ENCODE measurements at regions of chr14 and their contacts with region 1.

Region 1: DNA sequence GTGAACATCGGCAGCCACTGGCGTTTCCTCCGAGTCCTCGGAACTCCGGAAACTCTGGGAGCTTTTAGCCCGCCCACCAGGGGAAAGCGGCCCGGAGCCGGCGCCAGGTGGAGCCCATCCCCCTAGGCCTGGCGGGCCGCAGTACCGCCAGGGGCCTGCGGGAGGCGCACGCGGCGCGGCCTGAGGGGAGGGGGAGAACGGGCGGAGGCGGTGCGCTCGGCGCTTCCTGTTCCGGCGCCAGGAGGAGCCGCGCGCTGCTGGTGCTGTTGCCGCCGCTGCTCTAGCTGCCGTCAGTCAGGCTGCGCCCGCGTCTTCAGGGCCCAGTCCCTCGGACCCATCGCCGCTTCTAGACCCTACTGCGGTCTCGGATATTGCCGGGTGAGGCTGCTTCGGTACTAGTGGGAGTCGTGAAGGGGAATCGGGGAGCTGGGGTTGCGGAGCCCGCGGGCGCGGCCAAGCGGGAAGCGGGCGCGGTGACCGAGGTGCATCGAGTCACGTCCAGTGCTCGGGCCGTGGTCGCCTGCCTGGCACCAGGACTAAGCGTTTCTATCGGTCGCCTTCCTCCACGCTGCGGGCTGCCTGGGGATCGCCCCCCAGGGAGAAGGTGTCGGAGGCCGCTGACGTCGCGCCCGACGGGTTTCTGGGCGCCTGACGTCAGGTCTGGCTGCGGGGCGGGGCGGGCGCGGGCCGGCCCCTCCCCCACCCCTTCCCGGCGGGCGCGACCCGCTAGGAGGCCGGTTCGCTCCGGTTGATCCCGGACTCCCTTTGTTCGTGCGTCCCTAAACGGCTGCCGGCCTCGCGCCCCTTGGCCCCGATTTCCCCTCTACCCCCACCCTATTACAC is at the start of gene MAPK1IP1L:
- DNase-seq: peak; percentile 96
- H3K4me3 ChIP-seq: peak within 1 kb of the TSS; percentile 82 to 99 (median 94)
- H3K27ac ChIP-seq: peak within 1 kb of the TSS; percentile 97 to 100 (median 99)
- H3K4me1 ChIP-seq: peaks cover 0 to 39% (median 22%) of the 10 kb centered on the region in 4 donors
- H3K27me3 ChIP-seq: no peaks in the 10 kb centered on the region
- CTCF ChIP-seq: peak; percentile 99 to 100 (median 99)
- EP300 ChIP-seq: peak in 1 of 4 donors; percentile 10
- POLR2A ChIP-seq: peak; percentile 97 to 98
- total RNA-seq, gene MAPK1IP1L: 30.6 to 67.1 (median 46.4) TPM

Region 2: GRCh38 chr14:55026793-55027561 is 24.7 kb before region 1 on chr14 and contains the starts of genes SOCS4 and WDHD1:
- intact Hi-C with region 1: loop called (anchors 2 kb)
- DNase-seq: peak; percentile 96
- H3K4me3 ChIP-seq: peak within 1 kb of the TSS; percentile 59 to 79 (median 70)
- H3K27ac ChIP-seq: peak within 1 kb of the TSS; percentile 80 to 89 (median 87)
- H3K4me1 ChIP-seq: peaks cover 0 to 34% (median 25%) of the 10 kb centered on the region in 4 donors
- H3K27me3 ChIP-seq: no peaks in the 10 kb centered on the region
- CTCF ChIP-seq: no peak
- EP300 ChIP-seq: no peak
- POLR2A ChIP-seq: peak; percentile 61 to 68
- total RNA-seq, gene SOCS4: 21.9 to 28.5 (median 24.9) TPM
- total RNA-seq, gene WDHD1: 0.66 to 1.4 (median 0.96) TPM

Region 3: GRCh38 chr14:55085060-55085660 is 33.5 kb after region 1 on chr14:
- intact Hi-C with region 1: no loop called
- DNase-seq: no peak
- H3K4me3 ChIP-seq: no peak overlapping the region
- H3K27ac ChIP-seq: no peak overlapping the region
- H3K4me1 ChIP-seq: no peaks in the 10 kb centered on the region
- H3K27me3 ChIP-seq: no peaks in the 10 kb centered on the region
- CTCF ChIP-seq: no peak
- EP300 ChIP-seq: no peak
- POLR2A ChIP-seq: no peak

Measured in sigmoid colon (tissue), 7 donors.